ENCODE measurements at regions of chr20 and their contacts with region 1.

Region 1: GRCh38 chr20:58650776-58651558 is at the start of gene STX16:
- DNase-seq: peak; percentile 93
- H3K4me3 Mint-ChIP-seq: peak within 1 kb of the TSS; percentile 95
- H3K27ac Mint-ChIP-seq: peak within 1 kb of the TSS; percentile 99
- H3K4me1 Mint-ChIP-seq: peaks cover 17% of the 10 kb centered on the region
- H3K27me3 Mint-ChIP-seq: no peaks in the 10 kb centered on the region
- total RNA-seq, gene STX16: 127 TPM

Region 2: DNA sequence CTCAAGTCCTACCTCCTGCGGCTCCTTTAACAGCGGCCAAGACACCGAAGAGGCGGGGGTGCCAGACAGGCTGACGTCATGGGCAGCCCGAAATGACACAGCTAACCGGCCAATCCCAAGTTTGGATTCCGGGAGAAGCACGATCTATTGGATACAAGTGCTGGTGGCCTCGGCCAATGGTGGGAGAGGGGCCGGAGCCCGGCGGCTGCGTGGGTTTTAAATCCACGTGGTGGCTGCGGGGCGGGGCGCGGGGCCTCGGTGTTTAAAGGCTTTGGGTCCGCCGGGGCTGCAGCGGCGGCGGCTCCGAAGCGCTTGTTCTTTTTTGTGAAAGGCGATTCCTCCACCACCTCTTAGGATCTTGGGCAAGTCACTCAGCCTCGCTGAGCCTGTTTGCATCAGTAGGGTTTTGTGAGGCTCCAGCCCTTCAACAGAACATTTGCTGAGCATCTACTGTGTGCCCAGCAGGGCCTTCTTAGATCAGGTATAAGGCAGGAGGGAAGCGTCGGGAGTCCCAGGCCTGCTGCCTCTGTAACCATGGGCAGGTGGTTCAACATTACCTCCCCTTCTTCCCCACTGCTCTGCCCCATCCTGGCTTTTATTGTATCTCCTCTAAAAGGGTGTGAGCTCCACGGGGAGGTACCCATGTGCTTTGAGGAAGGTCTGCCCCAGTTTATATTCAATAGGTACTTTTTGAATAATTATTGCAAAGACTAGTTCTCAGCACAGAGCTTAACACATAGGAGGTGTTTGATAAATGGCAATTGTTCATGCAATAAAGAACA is 932.3 kb before region 1 on chr20:
- CTCF ChIA-PET with region 1: no interaction called
- intact Hi-C with region 1: loop called (anchors 10 kb)
- DNase-seq: peak; percentile 96
- H3K4me3 Mint-ChIP-seq: peak overlapping the region; percentile 46
- H3K27ac Mint-ChIP-seq: no peak overlapping the region
- H3K4me1 Mint-ChIP-seq: peaks cover 8% of the 10 kb centered on the region
- H3K27me3 Mint-ChIP-seq: no peaks in the 10 kb centered on the region

Region 3: GRCh38 chr20:58388882-58389323 is 262.1 kb before region 1 on chr20 and contains the start of gene VAPB:
- CTCF ChIA-PET with region 1: no interaction called
- intact Hi-C with region 1: loop called (anchors 5 kb)
- DNase-seq: peak; percentile 96
- H3K4me3 Mint-ChIP-seq: peak within 1 kb of the TSS; percentile 96
- H3K27ac Mint-ChIP-seq: peak within 1 kb of the TSS; percentile 90
- H3K4me1 Mint-ChIP-seq: peaks cover 42% of the 10 kb centered on the region
- H3K27me3 Mint-ChIP-seq: no peaks in the 10 kb centered on the region
- total RNA-seq, gene VAPB: 26.8 to 27.9 TPM

Region 4: DNA sequence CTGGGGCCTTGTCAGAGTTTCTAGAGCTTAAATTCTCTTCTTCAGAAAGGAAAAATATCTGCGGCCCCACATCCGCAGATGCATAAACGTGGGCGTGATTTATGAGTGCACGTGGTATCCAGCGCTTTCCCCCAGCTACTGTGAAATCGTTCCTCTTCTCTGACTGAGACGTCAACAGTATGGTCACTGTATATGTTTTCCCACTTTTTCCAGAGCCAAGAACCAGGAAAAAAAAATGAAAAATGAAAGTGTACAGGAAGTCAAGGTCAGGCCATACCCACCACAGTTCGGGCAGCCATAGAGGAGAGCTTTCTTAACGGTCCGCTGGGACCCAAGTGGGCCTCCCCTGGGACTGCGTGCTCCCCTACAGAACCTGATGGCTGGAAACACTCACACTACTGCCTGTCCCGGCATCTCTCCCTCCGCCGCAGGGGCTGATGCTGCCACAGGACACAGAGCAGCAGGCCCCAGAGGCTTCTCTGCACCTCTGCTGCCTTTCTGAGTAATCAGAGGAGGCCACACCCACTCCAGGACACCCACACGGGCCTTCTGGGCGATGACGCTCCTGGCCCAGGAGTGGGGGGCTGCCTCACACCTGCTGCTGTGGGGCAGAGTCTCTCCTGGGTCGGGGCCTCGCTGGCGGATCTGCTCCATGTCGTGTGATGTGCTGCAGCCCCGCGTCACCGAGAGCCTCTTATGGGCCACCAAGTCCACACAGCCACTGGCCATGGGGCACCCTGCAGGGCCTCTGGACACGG is 16.3 kb before region 1 on chr20:
- CTCF ChIA-PET with region 1: interaction called, 5 read pairs
- intact Hi-C with region 1: loop called (anchors 1 kb)
- DNase-seq: peak; percentile 70
- H3K4me3 Mint-ChIP-seq: peak overlapping the region; percentile 40
- H3K27ac Mint-ChIP-seq: peak overlapping the region; percentile 84
- H3K4me1 Mint-ChIP-seq: peaks cover 15% of the 10 kb centered on the region
- H3K27me3 Mint-ChIP-seq: no peaks in the 10 kb centered on the region

Region 5: DNA sequence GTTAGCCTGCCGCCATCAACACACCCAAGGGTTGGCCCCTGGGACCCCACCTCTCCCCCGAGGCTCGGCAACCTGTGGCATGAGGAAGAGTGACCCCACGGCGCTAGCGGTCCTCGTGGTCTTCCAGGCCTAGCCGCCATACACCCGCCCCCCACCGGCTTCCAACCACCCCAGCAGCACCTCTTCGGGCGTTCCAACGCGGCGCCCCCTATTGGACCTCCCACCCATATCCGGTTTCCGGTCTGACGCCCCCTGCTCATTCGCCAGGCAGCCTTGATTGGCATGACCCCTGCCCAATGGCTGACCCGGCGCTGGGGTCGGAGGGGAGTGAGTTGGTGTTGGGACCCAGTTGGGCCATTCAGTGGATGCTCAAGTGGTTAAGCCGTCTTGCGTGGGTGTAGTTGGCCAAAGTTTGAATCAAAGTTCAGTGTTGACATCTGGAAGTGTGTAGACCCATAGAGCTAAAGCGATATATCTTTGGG is 199.8 kb after region 1 on chr20 and contains the start of gene GNAS-AS1:
- CTCF ChIA-PET with region 1: interaction called, 4 read pairs
- intact Hi-C with region 1: loop called (anchors 1 kb)
- DNase-seq: peak; percentile 92
- H3K4me3 Mint-ChIP-seq: peak within 1 kb of the TSS; percentile 81
- H3K27ac Mint-ChIP-seq: no peak within 1 kb of the TSS
- H3K4me1 Mint-ChIP-seq: peaks cover 19% of the 10 kb centered on the region
- H3K27me3 Mint-ChIP-seq: peaks cover 27% of the 10 kb centered on the region
- total RNA-seq, gene GNAS-AS1: 1.6 to 1.9 TPM

Region 6: DNA sequence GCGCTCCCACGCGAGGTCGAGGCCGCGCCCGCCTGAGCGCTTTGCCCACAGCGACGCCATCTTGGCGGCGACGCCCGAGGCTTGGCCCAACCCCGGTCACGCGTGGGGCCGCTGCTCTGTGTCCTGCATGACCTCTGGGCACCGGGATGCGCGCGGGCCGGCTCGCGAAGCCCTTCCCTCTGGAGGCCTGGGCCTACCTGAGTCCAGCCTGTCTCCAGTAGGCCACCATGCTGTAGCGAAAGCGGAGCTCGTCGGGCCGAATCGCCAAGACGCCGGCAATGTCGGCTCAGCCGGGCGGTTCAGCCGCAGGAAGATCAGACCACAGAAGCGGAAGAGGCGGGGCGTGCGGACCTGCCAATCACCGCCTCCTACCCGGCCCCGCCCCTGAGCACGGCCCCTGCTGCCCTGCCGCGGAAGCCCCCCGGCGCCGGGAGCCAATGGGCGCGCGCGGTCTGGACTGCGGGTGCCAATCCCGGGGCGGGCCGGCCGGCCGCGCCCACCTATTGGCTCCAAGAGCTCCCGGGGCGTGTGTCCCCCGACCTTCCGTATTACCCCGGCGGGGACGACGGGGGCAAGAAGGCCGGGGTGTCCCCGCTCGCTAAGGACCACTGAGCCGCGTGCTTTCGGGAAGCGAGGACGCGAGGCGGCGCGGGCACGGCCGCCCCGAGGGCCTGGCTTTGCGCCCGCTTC is 381.2 kb after region 1 on chr20 and contains the start of gene ATP5F1E:
- CTCF ChIA-PET with region 1: no interaction called
- intact Hi-C with region 1: loop called (anchors 2 kb)
- DNase-seq: peak; percentile 95
- H3K4me3 Mint-ChIP-seq: peak within 1 kb of the TSS; percentile 94
- H3K27ac Mint-ChIP-seq: peak within 1 kb of the TSS; percentile 93
- H3K4me1 Mint-ChIP-seq: peaks cover 75% of the 10 kb centered on the region
- H3K27me3 Mint-ChIP-seq: no peaks in the 10 kb centered on the region
- total RNA-seq, gene ATP5F1E: 74.5 to 86.3 TPM

Measured in activated naive CD4-positive, alpha-beta T cell treated with anti-CD3 and anti-CD28 coated beads for 36 hours (primary cell).